Activated CD8-positive, alpha-beta memory T cell treated with anti-CD3 and anti-CD28 coated beads, Interleukin-2, amount 10 ng/mL, durations not matched to agents 7 days and 5 days (primary cell): ENCODE measurements at regions of chr7 and their contacts with region 1.

Region 1: GRCh38 chr7:101688183-101688831 is 59.2 kb upstream of the MYL10 start:
- DNase-seq: peak; percentile 84
- ATAC-seq: peak; percentile 94
- H3K4me3 Mint-ChIP-seq: no peak overlapping the region
- H3K27ac Mint-ChIP-seq: no peak overlapping the region
- H3K4me1 Mint-ChIP-seq: peaks cover 4% of the 10 kb centered on the region
- H3K27me3 Mint-ChIP-seq: no peaks in the 10 kb centered on the region

Region 2: DNA sequence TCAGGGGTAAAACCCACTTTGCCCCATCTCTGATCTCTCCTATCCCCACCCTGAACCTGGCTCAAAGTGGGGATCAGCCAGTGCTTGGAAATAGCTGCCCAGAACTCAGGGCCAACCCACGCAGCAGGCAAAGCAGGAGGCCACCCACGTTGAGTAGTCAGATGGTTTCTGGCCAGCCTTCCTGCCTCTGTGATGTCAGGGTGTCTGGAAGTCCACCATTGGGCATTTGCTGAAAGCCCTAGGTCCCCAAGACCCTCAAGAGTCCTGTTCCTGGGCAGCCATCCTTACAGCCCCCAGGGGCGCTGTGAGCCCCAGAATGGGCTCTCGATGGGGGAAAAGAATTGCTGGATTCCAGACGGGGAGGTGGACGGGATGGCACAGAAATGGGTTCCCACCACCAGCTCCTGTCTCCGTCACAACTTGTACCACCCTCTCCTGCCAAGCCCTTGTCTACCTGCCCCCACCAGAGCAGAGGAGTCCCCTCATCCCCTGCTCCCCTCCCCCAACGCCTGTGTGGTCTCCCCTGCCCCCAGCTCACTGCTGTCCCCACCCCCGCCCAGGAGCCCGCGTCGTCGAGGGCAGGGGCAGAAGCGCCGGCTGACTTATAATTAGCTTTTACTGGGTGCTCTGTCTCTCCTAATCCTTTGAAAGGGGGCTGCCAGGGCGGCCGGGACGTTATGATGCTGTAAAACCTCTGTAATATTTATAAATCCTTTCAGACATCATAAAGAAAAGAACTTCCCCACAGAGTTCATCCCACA is 63.1 kb before region 1 on chr7:
- CTCF ChIA-PET with region 1: no interaction called
- DNase-seq: no peak
- ATAC-seq: no peak
- H3K4me3 Mint-ChIP-seq: no peak overlapping the region
- H3K27ac Mint-ChIP-seq: no peak overlapping the region
- H3K4me1 Mint-ChIP-seq: no peaks in the 10 kb centered on the region
- H3K27me3 Mint-ChIP-seq: peaks cover 18% of the 10 kb centered on the region

Region 3: DNA sequence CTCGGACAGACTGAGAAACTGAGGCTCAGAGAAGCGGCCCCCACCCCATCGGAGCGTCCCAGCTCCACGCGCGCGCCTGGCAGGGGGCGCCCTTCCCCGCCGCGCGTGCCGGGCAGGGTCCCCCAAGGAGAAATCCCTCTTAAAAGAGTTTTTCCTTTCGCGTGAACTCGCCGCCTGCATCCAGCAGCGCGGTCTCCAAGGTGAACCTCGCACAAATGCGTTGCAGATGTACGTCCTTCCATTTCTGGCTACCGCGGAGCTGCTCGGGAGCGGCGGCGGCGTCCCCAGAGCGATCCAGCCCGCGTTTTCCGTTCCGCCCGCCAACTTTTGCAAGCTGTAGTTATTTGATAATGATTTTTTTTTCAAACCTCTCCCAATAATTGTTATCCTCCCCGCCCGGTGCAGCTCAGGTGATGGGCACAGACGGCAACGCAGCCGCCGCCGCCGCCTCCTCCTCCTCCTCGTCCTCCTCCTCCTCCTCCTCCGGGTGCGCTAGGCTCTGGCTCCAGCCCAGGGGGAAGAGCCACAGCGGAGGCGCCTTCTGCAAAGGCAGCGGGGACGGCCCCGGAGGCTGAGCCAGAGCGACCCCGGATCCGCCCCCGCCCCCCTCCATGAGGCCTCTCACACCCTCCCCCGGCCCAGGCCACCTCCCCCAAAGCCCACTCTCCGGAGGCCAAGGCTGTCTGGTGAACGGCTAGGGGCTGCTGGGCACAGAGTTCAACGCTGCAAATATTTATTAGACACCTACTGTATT is 55.1 kb after region 1 on chr7:
- CTCF ChIA-PET with region 1: interaction called, 14 read pairs
- DNase-seq: peak; percentile 77
- ATAC-seq: peak; percentile 74
- H3K4me3 Mint-ChIP-seq: peak overlapping the region; percentile 78
- H3K27ac Mint-ChIP-seq: peak overlapping the region; percentile 63
- H3K4me1 Mint-ChIP-seq: peaks cover 56% of the 10 kb centered on the region
- H3K27me3 Mint-ChIP-seq: no peaks in the 10 kb centered on the region

Region 4: GRCh38 chr7:101815835-101816493 is 127.7 kb after region 1 on chr7:
- CTCF ChIA-PET with region 1: interaction called, 15 read pairs
- DNase-seq: peak; percentile 78
- ATAC-seq: peak; percentile 77
- H3K4me3 Mint-ChIP-seq: peak overlapping the region; percentile 66
- H3K27ac Mint-ChIP-seq: peak overlapping the region; percentile 49
- H3K4me1 Mint-ChIP-seq: peaks cover 10% of the 10 kb centered on the region
- H3K27me3 Mint-ChIP-seq: peaks cover 37% of the 10 kb centered on the region

Region 5: GRCh38 chr7:101856473-101857357 is 168.4 kb after region 1 on chr7:
- CTCF ChIA-PET with region 1: interaction called, 12 read pairs
- DNase-seq: peak; percentile 92
- ATAC-seq: peak; percentile 98
- H3K4me3 Mint-ChIP-seq: peak overlapping the region; percentile 84
- H3K27ac Mint-ChIP-seq: peak overlapping the region; percentile 97
- H3K4me1 Mint-ChIP-seq: peaks cover 26% of the 10 kb centered on the region
- H3K27me3 Mint-ChIP-seq: no peaks in the 10 kb centered on the region